SK-N-SH (cell line): ENCODE measurements at regions of chr9 and their contacts with region 1.

Region 1: DNA sequence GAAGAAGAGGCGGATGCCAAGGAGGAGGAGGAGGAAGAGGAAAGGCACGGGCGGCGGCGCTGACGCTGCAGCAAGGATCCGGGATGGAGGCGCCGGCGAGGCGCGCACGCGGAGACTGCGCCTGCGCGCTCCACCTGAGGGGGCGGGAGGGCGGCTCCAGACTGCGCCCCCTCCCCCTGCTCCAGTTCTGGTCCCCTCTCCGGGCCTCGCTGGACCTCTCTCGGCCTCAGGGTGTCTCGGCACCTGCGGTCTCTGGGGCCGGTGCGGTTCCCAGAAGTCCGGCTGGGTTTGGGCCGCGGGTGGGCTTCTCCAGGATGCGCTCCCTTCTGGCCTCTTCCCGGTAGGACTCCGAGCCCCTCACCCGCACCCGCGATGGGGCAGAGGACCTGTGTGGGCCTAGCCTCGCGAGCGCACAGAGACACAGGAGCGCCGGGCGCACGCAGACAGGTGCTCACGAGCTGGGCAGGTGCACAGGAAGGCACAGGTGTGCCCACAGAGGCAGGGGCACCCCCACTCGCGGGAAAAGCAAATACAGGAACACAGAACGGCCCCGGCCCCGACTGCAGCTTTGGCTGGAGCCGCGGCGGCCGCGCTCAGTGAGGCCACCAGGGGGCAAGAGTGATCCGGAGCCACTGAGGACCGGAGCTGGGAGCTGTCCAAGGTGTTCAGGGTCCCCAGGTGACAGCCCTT is at the start of gene NPDC1:
- DNase-seq: peak; percentile 96
- H3K4me3 ChIP-seq: peak within 1 kb of the TSS; percentile 62 to 73
- H3K27ac ChIP-seq: peak within 1 kb of the TSS in 1 of 2 experiments; percentile 78; a peak in 2 of 4 replicates
- H3K4me1 ChIP-seq: peaks cover 11 to 25% of the 10 kb centered on the region in 2 experiments; a peak in 2 of 4 replicates
- H3K27me3 ChIP-seq: 0 out of 2 replicates have a peak, but pooled peaks cover 5% of the 10 kb centered on the region
- CTCF ChIP-seq: peak; percentile 87
- EP300 ChIP-seq: no peak
- RAD21 ChIP-seq: peak; percentile 75
- polyA plus RNA-seq, gene NPDC1: 47.4 and 48.1 TPM in 2 replicates

Region 2: DNA sequence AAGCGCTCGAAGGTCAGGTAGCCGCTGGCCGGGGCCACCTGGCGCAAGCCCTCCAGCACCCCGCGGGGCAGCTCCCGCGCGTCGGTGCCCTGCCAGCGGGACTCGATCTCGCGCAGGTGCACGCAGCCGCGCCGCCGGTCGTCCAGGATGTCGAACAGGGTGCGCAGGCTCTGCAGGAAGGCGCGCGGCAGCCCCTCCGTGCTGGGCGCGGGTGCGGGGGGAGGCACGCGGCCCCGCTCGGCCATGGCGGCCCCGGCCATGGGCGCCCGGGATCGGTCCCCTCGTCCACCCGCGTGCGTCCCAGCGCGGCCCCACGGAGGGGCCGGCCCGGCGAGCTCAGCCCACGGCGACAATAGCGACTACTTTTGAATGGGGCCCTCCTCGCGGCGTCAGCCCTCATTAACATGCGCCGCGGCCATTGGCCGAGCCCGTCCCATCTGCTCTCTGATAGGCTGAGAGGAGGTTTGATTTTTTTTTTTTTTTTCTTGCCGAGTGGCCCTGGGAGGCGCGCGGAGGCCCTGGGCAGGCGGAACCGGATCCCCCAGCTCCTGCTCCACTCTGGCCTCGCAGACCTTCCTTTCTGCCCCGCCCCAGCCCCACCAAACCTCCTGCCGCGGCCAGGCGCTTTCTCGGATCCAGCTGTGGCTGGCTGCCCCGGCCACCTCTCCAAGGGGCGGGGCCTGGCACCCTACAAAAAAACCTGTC is 24.1 kb after region 1 on chr9 and contains the start of gene SAPCD2:
- CTCF ChIA-PET with region 1: interaction called, 803 read pairs
- POLR2A ChIA-PET with region 1: interaction called, 12 read pairs
- DNase-seq: peak; percentile 95
- H3K4me3 ChIP-seq: peak within 1 kb of the TSS; percentile 53 to 57
- H3K27ac ChIP-seq: peak within 1 kb of the TSS in 1 of 2 experiments; percentile 80; a peak in 2 of 4 replicates
- H3K4me1 ChIP-seq: peaks cover 0 to 29% of the 10 kb centered on the region in 2 experiments; a peak in 1 of 4 replicates
- H3K27me3 ChIP-seq: no peaks in the 10 kb centered on the region
- CTCF ChIP-seq: no peak
- EP300 ChIP-seq: no peak
- RAD21 ChIP-seq: no peak
- polyA plus RNA-seq, gene SAPCD2: 4.6 and 6.0 TPM in 2 replicates

Region 3: GRCh38 chr9:137086531-137087408 is 40.5 kb after region 1 on chr9 and contains the start of gene MAN1B1:
- CTCF ChIA-PET with region 1: interaction called, 18 read pairs
- POLR2A ChIA-PET with region 1: interaction called, 4 read pairs
- DNase-seq: peak; percentile 98
- H3K4me3 ChIP-seq: peak within 1 kb of the TSS; percentile 80 to 93
- H3K27ac ChIP-seq: peak within 1 kb of the TSS; percentile 57 to 88
- H3K4me1 ChIP-seq: peaks cover 13 to 21% of the 10 kb centered on the region in 2 experiments
- H3K27me3 ChIP-seq: no peaks in the 10 kb centered on the region
- CTCF ChIP-seq: no peak
- EP300 ChIP-seq: no peak
- RAD21 ChIP-seq: no peak
- polyA plus RNA-seq, gene MAN1B1: 57.8 and 61.9 TPM in 2 replicates

Region 4: GRCh38 chr9:137129456-137130175 is 83.4 kb after region 1 on chr9:
- CTCF ChIA-PET with region 1: interaction called, 10 read pairs
- POLR2A ChIA-PET with region 1: no interaction called
- DNase-seq: peak; percentile 96
- H3K4me3 ChIP-seq: peak overlapping the region; percentile 77 to 89
- H3K27ac ChIP-seq: peak overlapping the region; percentile 56 to 87
- H3K4me1 ChIP-seq: peaks cover 3 to 18% of the 10 kb centered on the region in 2 experiments; a peak in 3 of 4 replicates
- H3K27me3 ChIP-seq: no peaks in the 10 kb centered on the region
- CTCF ChIP-seq: no peak
- EP300 ChIP-seq: no peak
- RAD21 ChIP-seq: no peak